CD4-positive, alpha-beta memory T cell (primary cell): ENCODE measurements at regions of chr19 and their contacts with region 1.

Region 1: DNA sequence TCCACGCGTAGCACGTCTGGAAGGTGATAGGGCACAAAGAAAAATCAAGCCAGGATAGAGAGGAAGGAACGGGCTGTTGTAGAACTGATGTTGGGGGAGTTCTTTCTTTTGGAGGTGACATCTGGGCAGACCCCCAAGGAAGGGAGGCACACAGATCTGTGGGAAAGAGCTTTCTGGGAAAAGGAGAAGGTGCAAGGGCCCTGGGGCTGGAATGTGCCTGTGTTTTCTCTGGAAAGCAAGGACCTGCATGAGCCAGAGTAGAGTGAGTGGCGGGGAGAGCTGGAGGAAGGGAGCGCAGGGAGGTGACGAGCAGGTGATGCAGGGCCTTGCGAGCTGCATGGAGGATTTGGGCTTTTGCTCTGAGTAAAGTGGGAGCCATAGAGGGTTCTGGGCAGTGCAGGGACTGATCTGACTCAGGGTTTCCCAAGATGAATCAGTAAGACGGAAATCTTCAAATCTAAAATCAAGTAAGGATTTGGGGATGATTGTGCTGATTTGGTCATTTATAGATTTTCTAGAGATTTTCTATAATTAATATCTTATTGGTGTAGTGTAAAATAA is 30.8 kb downstream of the SMARCA4 start:
- DNase-seq: no peak
- H3K4me3 ChIP-seq: no peak overlapping the region
- H3K4me3 Mint-ChIP-seq: no peak overlapping the region
- H3K27ac ChIP-seq: no peak overlapping the region
- H3K27ac Mint-ChIP-seq: peak overlapping the region in 4 of 7 donors; percentile 4 to 86 (median 54)
- H3K4me1 ChIP-seq: no peaks in the 10 kb centered on the region
- H3K4me1 Mint-ChIP-seq: peaks cover 0 to 1% (median 0%) of the 10 kb centered on the region in 4 donors
- H3K27me3 ChIP-seq: no peaks in the 10 kb centered on the region
- H3K27me3 Mint-ChIP-seq: no peaks in the 10 kb centered on the region

Region 2: GRCh38 chr19:10946964-10947657 is 44.5 kb before region 1 on chr19:
- CTCF ChIA-PET with region 1: interaction called, 3 read pairs
- POLR2A ChIA-PET with region 1: no interaction called
- intact Hi-C with region 1: loop called (anchors 1 kb)
- DNase-seq: no peak
- H3K4me3 ChIP-seq: no peak overlapping the region
- H3K4me3 Mint-ChIP-seq: no peak overlapping the region
- H3K27ac ChIP-seq: no peak overlapping the region
- H3K27ac Mint-ChIP-seq: no peak overlapping the region
- H3K4me1 ChIP-seq: no peaks in the 10 kb centered on the region
- H3K4me1 Mint-ChIP-seq: peaks cover under 1 to 2% (median 2%) of the 10 kb centered on the region in 4 donors
- H3K27me3 ChIP-seq: no peaks in the 10 kb centered on the region
- H3K27me3 Mint-ChIP-seq: no peaks in the 10 kb centered on the region